ENCODE measurements at regions of chr13 and their contacts with region 1.

Region 1: GRCh38 chr13:51583875-51584730 is at the start of gene WDFY2:
- DNase-seq: peak; percentile 100
- ATAC-seq: peak; percentile 90
- H3K4me3 ChIP-seq: peak within 1 kb of the TSS; percentile 97
- H3K27ac ChIP-seq: peak within 1 kb of the TSS; percentile 81
- H3K4me1 ChIP-seq: peaks cover 5% of the 10 kb centered on the region
- H3K27me3 ChIP-seq: no peaks in the 10 kb centered on the region
- CTCF ChIP-seq: peak; percentile 31; the same call in 1 of the 2 replicates
- POLR2A ChIP-seq: peak; percentile 92
- RAD21 ChIP-seq: peak; percentile 29
- total RNA-seq, gene WDFY2: 4.3 and 6.7 TPM in 2 replicates

Region 2: GRCh38 chr13:51444922-51445321 is 139.2 kb before region 1 on chr13:
- CTCF ChIA-PET with region 1: interaction called, 3 read pairs
- POLR2A ChIA-PET with region 1: no interaction called
- dilution Hi-C with region 1: no loop called
- in situ Hi-C with region 1: loop called (anchors 10 kb)
- intact Hi-C with region 1: no loop called
- DNase-seq: peak; percentile 68
- ATAC-seq: no peak; the same call in 1 of the 2 replicates
- H3K4me3 ChIP-seq: no peak overlapping the region
- H3K27ac ChIP-seq: no peak overlapping the region
- H3K4me1 ChIP-seq: no peaks in the 10 kb centered on the region
- H3K27me3 ChIP-seq: no peaks in the 10 kb centered on the region
- CTCF ChIP-seq: peak; percentile 55
- POLR2A ChIP-seq: no peak
- RAD21 ChIP-seq: peak; percentile 63

Region 3: DNA sequence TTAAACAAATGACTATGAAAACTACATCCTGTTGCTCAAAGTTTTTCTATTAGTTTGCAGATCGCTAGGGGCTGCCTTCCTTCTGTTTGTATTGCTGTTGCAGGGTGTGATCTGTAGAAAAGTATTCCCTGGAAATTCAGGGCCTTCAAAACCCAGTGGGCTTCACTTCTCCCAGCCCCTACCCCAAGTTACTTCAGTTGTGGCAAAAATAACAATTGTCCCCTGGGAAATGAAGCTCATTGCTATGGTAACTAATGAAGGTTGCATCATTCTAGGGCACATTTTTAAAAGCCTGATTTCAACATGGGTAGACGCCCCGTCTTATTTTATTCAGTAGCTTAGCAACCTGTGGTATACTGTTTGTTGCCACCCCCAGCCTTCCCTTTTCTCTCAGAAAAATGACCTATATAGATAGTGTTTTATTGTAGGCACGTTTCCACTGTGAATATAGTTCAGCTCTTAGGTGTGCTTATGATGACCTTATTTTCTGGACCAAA is 61.1 kb after region 1 on chr13:
- CTCF ChIA-PET with region 1: no interaction called
- POLR2A ChIA-PET with region 1: no interaction called
- dilution Hi-C with region 1: no loop called
- in situ Hi-C with region 1: no loop called
- intact Hi-C with region 1: loop called (anchors 1 kb)
- DNase-seq: peak; percentile 57
- ATAC-seq: no peak
- H3K4me3 ChIP-seq: no peak overlapping the region
- H3K27ac ChIP-seq: peak overlapping the region; percentile 39; the same call in 1 of the 2 replicates
- H3K4me1 ChIP-seq: peaks cover 15% of the 10 kb centered on the region
- H3K27me3 ChIP-seq: no peaks in the 10 kb centered on the region
- CTCF ChIP-seq: no peak
- POLR2A ChIP-seq: no peak
- RAD21 ChIP-seq: no peak

Region 4: DNA sequence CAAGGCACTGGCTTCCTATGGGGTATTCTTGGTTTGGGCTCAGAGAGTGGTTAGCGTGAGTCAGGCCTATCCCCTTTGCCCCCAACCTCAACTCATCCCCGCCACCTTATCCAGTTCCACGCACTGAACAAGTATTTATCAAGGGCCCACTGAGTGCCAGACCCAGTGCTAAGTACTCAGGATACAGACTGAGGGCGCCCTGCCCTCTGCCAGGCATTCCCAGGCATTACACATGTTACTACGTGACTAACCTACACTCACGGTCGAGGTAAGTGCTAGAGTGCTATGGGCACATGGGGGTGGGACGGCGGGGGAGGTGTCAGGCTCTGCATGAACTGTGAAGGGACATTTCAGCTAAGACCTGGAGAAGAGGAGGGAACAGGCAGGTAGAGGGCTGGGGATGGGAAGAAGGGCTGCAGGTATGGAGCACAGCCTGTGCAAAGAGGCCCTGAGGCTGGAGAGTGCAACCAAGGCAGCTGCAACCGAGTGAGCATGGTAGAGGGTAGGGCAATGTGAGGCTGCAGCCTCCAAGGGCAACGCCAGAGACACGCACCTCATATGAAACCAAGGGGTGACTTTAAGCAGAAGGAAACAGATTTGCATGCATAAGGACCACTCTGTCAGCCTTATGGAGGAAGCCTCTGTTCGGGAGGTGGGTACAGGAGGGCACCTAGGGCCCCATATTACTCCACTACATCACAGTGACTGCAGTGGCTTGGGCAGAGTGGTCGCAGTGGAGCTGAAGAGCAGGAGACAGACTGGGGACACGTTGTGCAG is 197.3 kb after region 1 on chr13:
- CTCF ChIA-PET with region 1: no interaction called
- POLR2A ChIA-PET with region 1: no interaction called
- dilution Hi-C with region 1: no loop called
- in situ Hi-C with region 1: no loop called
- intact Hi-C with region 1: loop called (anchors 5 kb)
- DNase-seq: peak; percentile 24
- ATAC-seq: peak; percentile 64
- H3K4me3 ChIP-seq: no peak overlapping the region
- H3K27ac ChIP-seq: no peak overlapping the region
- H3K4me1 ChIP-seq: peaks cover 6% of the 10 kb centered on the region
- H3K27me3 ChIP-seq: peaks cover 2% of the 10 kb centered on the region; the same call in 1 of the 2 replicates
- CTCF ChIP-seq: peak; percentile 39
- POLR2A ChIP-seq: no peak
- RAD21 ChIP-seq: peak; percentile 58

Region 5: GRCh38 chr13:51803422-51804294 is 219.6 kb after region 1 on chr13 and contains the start of gene DHRS12:
- CTCF ChIA-PET with region 1: no interaction called
- POLR2A ChIA-PET with region 1: no interaction called
- dilution Hi-C with region 1: no loop called
- in situ Hi-C with region 1: no loop called
- intact Hi-C with region 1: loop called (anchors 1 kb)
- DNase-seq: peak; percentile 66
- ATAC-seq: peak; percentile 96
- H3K4me3 ChIP-seq: peak within 1 kb of the TSS; percentile 84
- H3K27ac ChIP-seq: peak within 1 kb of the TSS; percentile 40; the same call in 1 of the 2 replicates
- H3K4me1 ChIP-seq: peaks cover 4% of the 10 kb centered on the region
- H3K27me3 ChIP-seq: no peaks in the 10 kb centered on the region
- CTCF ChIP-seq: no peak
- POLR2A ChIP-seq: peak; percentile 94
- RAD21 ChIP-seq: peak; percentile 26; the same call in 1 of the 2 replicates
- total RNA-seq, gene DHRS12: 1.3 and 1.9 TPM in 2 replicates

Measured in IMR-90 (cell line).